Breast epithelium (tissue), 4 donors: ENCODE measurements at regions of chr4 and their contacts with region 1.

Region 1: GRCh38 chr4:182531555-182532162 is 288.5 kb downstream of the TENM3 start:
- DNase-seq: no peak
- H3K4me3 ChIP-seq: no peak overlapping the region
- H3K27ac ChIP-seq: peak overlapping the region in 1 of 2 donors; percentile 38
- H3K4me1 ChIP-seq: no peaks in the 10 kb centered on the region
- H3K27me3 ChIP-seq: no peaks in the 10 kb centered on the region
- CTCF ChIP-seq: no peak
- POLR2A ChIP-seq: no peak

Region 2: DNA sequence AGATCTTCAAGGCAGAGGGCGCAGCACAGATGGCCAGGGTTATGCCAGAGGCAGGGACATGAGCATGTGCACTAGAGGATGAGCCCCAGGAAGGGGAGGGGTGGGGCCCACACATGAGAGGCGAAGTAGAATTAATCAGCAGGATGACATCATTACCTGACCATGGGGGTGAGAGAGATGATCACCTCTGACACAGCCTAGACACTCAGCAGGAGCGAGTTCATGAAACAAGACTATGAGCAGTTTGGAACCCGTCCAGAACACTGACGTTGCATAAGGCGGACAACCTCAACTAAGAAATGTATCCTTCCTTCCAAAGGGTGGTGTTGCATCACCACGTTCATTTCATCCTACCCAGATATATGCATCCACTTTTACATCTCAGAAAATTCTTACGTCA is 735.2 kb before region 1 on chr4:
- intact Hi-C with region 1: loop called (anchors 5 kb)
- DNase-seq: no peak
- H3K4me3 ChIP-seq: no peak overlapping the region
- H3K27ac ChIP-seq: no peak overlapping the region
- H3K4me1 ChIP-seq: no peaks in the 10 kb centered on the region
- H3K27me3 ChIP-seq: no peaks in the 10 kb centered on the region
- CTCF ChIP-seq: no peak
- POLR2A ChIP-seq: no peak

Region 3: DNA sequence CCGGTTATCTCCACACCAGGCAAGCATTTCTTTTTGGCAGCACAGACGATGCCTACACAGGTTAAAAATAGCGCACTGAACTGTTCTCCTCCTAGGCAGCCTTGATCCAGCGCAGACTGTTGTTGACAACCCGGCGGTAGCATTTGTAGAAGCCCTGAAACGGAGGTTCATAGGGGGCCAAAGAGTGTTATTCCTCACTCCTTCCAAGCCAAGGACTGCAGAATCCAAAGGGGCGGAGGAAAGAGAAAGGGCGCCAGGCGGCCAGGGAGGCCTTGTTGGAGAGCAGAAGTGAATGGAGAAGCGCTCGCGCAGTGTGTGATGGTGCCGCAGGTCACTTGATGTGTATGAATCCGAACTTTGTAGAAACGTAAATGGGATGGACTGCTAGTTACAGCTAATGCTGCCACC is 205.8 kb before region 1 on chr4:
- intact Hi-C with region 1: no loop called
- DNase-seq: no peak
- H3K4me3 ChIP-seq: no peak overlapping the region
- H3K27ac ChIP-seq: no peak overlapping the region
- H3K4me1 ChIP-seq: no peaks in the 10 kb centered on the region
- H3K27me3 ChIP-seq: no peaks in the 10 kb centered on the region
- CTCF ChIP-seq: no peak
- POLR2A ChIP-seq: no peak

Region 4: GRCh38 chr4:182575225-182575624 is 43.6 kb after region 1 on chr4:
- intact Hi-C with region 1: loop called (anchors 2 kb)
- DNase-seq: no peak
- H3K4me3 ChIP-seq: no peak overlapping the region
- H3K27ac ChIP-seq: no peak overlapping the region
- H3K4me1 ChIP-seq: no peaks in the 10 kb centered on the region
- H3K27me3 ChIP-seq: no peaks in the 10 kb centered on the region
- CTCF ChIP-seq: no peak
- POLR2A ChIP-seq: no peak